Panc1 (cell line): ENCODE measurements at regions of chr16 and their contacts with region 1.

Region 1: GRCh38 chr16:77171745-77172635 is 19.0 kb upstream of the MON1B start:
- DNase-seq: no peak
- ATAC-seq: peak; percentile 90
- H3K4me3 ChIP-seq: no peak overlapping the region
- H3K27ac ChIP-seq: no peak overlapping the region
- H3K4me1 ChIP-seq: no peaks in the 10 kb centered on the region
- H3K27me3 ChIP-seq: no peaks in the 10 kb centered on the region
- CTCF ChIP-seq: peak; percentile 72

Region 2: GRCh38 chr16:75789237-75789636 is 1382.8 kb before region 1 on chr16:
- CTCF ChIA-PET with region 1: interaction called, 3 read pairs
- POLR2A ChIA-PET with region 1: no interaction called
- in situ Hi-C with region 1: no loop called
- intact Hi-C with region 1: loop called (anchors 5 kb)
- DNase-seq: peak; percentile 30
- ATAC-seq: peak; percentile 73; the same call in 1 of the 2 replicates
- H3K4me3 ChIP-seq: no peak overlapping the region
- H3K27ac ChIP-seq: no peak overlapping the region
- H3K4me1 ChIP-seq: no peaks in the 10 kb centered on the region
- H3K27me3 ChIP-seq: no peaks in the 10 kb centered on the region
- CTCF ChIP-seq: peak; percentile 75

Region 3: DNA sequence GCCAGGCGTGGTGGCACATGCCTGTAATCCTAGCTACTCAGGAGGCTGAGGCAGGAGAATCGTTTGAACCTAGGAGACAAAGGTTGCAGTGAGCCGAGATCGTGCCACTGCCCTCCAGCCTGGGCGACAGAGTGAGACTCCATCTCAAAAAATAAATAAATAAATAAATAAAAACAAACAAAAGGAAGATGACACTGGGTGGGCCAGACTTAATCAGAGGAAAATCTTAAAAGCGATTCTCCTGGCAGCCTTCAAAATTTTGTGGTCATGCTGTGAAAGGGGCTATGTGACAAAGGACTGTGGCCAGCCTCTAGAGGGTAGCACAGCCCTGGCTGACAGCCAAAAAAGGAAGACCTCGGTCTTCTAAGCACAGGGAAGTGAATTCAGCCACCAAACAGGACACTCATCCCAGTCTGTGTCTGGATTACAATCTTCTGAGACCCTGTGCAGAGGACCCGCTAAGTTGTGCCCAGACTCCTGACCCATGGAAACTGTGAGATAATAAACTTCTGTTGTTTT is 503.7 kb before region 1 on chr16:
- CTCF ChIA-PET with region 1: no interaction called
- POLR2A ChIA-PET with region 1: no interaction called
- in situ Hi-C with region 1: no loop called
- intact Hi-C with region 1: loop called (anchors 5 kb)
- DNase-seq: no peak
- ATAC-seq: no peak
- H3K4me3 ChIP-seq: no peak overlapping the region
- H3K27ac ChIP-seq: no peak overlapping the region
- H3K4me1 ChIP-seq: no peaks in the 10 kb centered on the region
- H3K27me3 ChIP-seq: no peaks in the 10 kb centered on the region
- CTCF ChIP-seq: no peak

Region 4: GRCh38 chr16:77308163-77308561 is 136.2 kb after region 1 on chr16:
- CTCF ChIA-PET with region 1: no interaction called
- POLR2A ChIA-PET with region 1: no interaction called
- in situ Hi-C with region 1: no loop called
- intact Hi-C with region 1: no loop called
- DNase-seq: no peak
- ATAC-seq: no peak
- H3K4me3 ChIP-seq: no peak overlapping the region
- H3K27ac ChIP-seq: peak overlapping the region; percentile 69; the same call in 1 of the 2 replicates
- H3K4me1 ChIP-seq: no peaks in the 10 kb centered on the region
- H3K27me3 ChIP-seq: no peaks in the 10 kb centered on the region
- CTCF ChIP-seq: no peak